Endothelial cell of umbilical vein (primary cell): ENCODE measurements at regions of chrX and their contacts with region 1.

Region 1: GRCh38 chrX:8692871-8693270 is 39.1 kb downstream of the ANOS1 start:
- DNase-seq: peak; percentile 57
- H3K4me3 ChIP-seq: no peak overlapping the region
- H3K27ac ChIP-seq: no peak overlapping the region
- H3K4me1 ChIP-seq: peaks cover 15% of the 10 kb centered on the region
- H3K27me3 ChIP-seq: no peaks in the 10 kb centered on the region
- CTCF ChIP-seq: no peak
- POLR2A ChIP-seq: no peak

Region 2: GRCh38 chrX:7828594-7828993 is 864.3 kb before region 1 on chrX:
- CTCF ChIA-PET with region 1: no interaction called
- POLR2A ChIA-PET with region 1: no interaction called
- dilution Hi-C with region 1: no loop called
- intact Hi-C with region 1: no loop called
- DNase-seq: no peak
- H3K4me3 ChIP-seq: no peak overlapping the region
- H3K27ac ChIP-seq: no peak overlapping the region
- H3K4me1 ChIP-seq: no peaks in the 10 kb centered on the region
- H3K27me3 ChIP-seq: no peaks in the 10 kb centered on the region
- CTCF ChIP-seq: no peak
- POLR2A ChIP-seq: no peak

Region 3: GRCh38 chrX:8731559-8732395 is 38.9 kb after region 1 on chrX and contains the start of gene ANOS1:
- CTCF ChIA-PET with region 1: no interaction called
- POLR2A ChIA-PET with region 1: no interaction called
- dilution Hi-C with region 1: no loop called
- intact Hi-C with region 1: loop called (anchors 1 kb)
- DNase-seq: peak; percentile 52
- H3K4me3 ChIP-seq: peak within 1 kb of the TSS; percentile 16 to 38 (median 36)
- H3K27ac ChIP-seq: no peak within 1 kb of the TSS
- H3K4me1 ChIP-seq: peaks cover 4% of the 10 kb centered on the region
- H3K27me3 ChIP-seq: peaks cover 3 to 4% of the 10 kb centered on the region in 2 experiments
- CTCF ChIP-seq: no peak
- POLR2A ChIP-seq: no peak
- total RNA-seq, gene ANOS1: 0.18 and 0.55 TPM in 2 replicates